Left ventricle myocardium superior (tissue), 1 donor: ENCODE measurements at regions of chr7 and their contacts with region 1.

Region 1: GRCh38 chr7:80883188-80884025 is 35.4 kb downstream of the SEMA3C start:
- DNase-seq: no peak
- ATAC-seq: peak; percentile 79

Region 2: DNA sequence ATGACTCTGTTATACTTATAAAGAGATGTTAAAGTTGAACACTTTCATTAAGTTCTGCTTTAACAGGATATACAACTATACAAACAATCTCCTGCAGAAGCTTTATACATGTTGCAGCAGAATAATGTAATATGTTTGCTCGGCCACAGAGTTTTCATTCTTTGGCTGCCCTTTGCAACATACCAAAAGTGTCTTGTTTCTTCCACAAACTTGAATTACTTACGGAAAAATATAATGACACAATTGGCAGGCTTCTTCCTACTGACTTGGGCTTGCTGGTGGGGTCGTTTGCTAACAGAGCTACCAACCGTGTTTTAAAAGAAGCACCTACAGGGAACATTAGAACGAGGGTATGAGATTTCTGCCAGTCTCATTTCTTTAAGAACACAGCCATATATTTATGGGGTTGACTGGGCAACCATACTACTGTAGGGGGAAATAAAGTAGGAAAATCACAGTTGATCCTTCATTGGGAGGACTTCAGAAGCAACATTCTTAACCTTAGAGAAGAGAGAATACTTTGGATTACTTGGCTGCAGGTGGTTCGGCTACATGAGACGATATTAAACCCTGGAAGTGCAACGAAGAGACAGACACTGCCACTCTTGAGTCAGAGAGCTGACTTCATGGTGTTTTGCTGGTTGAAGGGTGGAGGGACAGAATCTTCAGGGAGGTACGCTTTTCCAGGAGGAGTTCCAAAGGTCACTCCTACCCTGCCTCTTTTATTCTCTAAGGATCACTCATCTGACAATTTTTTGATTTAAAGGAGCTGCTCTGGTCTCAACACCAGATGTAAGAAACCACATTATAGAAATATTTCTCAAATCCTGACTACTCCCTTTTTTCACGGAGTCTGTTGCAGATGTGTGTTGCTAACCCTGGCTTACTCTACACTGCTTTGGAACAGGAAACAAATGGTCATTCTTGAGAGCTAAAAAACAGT is 88.5 kb before region 1 on chr7:
- intact Hi-C with region 1: loop called (anchors 10 kb)
- DNase-seq: no peak
- ATAC-seq: peak; percentile 54